GM12878 (cell line): ENCODE measurements at regions of chr1 and their contacts with region 1.

Region 1: DNA sequence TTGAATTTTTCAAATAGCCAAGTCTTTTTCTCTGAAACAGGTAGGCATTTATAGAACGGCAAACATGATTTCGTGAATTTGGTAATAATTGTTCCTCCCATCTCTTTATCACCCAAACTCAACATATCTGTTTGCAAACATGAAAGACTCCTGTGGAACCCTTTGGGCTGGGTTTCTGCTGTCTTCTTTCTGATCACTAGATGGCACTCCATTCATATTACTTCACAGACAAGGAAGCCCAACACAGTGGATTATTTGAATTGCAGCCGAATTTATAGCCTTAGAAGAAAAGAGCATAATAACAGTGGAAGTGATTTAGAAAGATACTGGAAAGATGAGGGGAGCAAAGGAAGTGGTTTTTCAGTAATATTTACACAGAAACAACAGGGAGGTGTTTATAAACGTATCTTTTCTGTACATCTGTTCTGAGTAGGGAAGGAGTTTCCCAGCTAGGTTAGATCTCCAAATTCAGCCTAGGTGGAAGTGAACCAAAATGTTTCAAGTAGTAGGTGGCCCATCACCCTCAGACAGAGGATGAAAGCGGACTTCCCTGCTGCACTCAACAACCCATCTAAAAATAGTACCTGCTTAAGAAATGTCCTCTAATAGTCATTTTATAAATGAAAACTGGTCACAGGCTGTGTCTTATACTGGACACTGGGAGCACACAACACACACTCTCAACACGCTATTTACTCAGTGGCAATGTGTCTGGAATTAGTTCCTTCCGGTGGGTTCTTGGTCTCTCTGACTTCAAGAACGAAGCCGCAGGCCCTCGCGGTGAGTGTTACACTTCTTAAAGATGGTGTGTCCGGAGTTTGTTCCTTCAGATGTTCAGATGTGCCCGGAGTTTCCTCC is 67.6 kb downstream of the MAP3K21 start:
- DNase-seq: no peak
- ATAC-seq: peak; percentile 96
- H3K4me3 ChIP-seq: no peak overlapping the region
- H3K27ac ChIP-seq: no peak overlapping the region
- H3K4me1 ChIP-seq: no peaks in the 10 kb centered on the region
- H3K27me3 ChIP-seq: no peaks in the 10 kb centered on the region; a peak in 1 of 4 replicates
- CTCF ChIP-seq: peak; percentile 76 to 89 (median 77)
- EP300 ChIP-seq: no peak
- POLR2A ChIP-seq: no peak
- RAD21 ChIP-seq: peak; percentile 98

Region 2: GRCh38 chr1:233364695-233365539 is 30.2 kb before region 1 on chr1:
- CTCF ChIA-PET with region 1: interaction called, 16 read pairs
- POLR2A ChIA-PET with region 1: no interaction called
- RAD21 ChIA-PET with region 1: no interaction called
- SMC1A ChIA-PET with region 1: no interaction called
- in situ Hi-C with region 1: no loop called
- intact Hi-C with region 1: no loop called
- DNase-seq: no peak
- ATAC-seq: 0 out of 3 replicates have a peak, but pooled peaks have one; percentile 19
- H3K4me3 ChIP-seq: no peak overlapping the region
- H3K27ac ChIP-seq: no peak overlapping the region
- H3K4me1 ChIP-seq: no peaks in the 10 kb centered on the region
- H3K27me3 ChIP-seq: no peaks in the 10 kb centered on the region
- CTCF ChIP-seq: peak; percentile 45 to 53 (median 52); a peak in 4 of 6 replicates
- EP300 ChIP-seq: no peak
- POLR2A ChIP-seq: no peak
- RAD21 ChIP-seq: peak; percentile 49; the same call in 1 of the 2 replicates

Region 3: GRCh38 chr1:233505130-233505529 is 110.0 kb after region 1 on chr1:
- CTCF ChIA-PET with region 1: no interaction called
- POLR2A ChIA-PET with region 1: no interaction called
- RAD21 ChIA-PET with region 1: no interaction called
- SMC1A ChIA-PET with region 1: no interaction called
- in situ Hi-C with region 1: no loop called
- intact Hi-C with region 1: no loop called
- DNase-seq: no peak
- ATAC-seq: peak; percentile 50
- H3K4me3 ChIP-seq: no peak overlapping the region
- H3K27ac ChIP-seq: no peak overlapping the region
- H3K4me1 ChIP-seq: no peaks in the 10 kb centered on the region
- H3K27me3 ChIP-seq: no peaks in the 10 kb centered on the region
- CTCF ChIP-seq: no peak
- EP300 ChIP-seq: no peak
- POLR2A ChIP-seq: no peak
- RAD21 ChIP-seq: no peak

Region 4: GRCh38 chr1:233607252-233608119 is 212.4 kb after region 1 on chr1:
- CTCF ChIA-PET with region 1: no interaction called
- POLR2A ChIA-PET with region 1: no interaction called
- RAD21 ChIA-PET with region 1: no interaction called
- SMC1A ChIA-PET with region 1: no interaction called
- in situ Hi-C with region 1: no loop called
- intact Hi-C with region 1: loop called (anchors 2 kb)
- DNase-seq: no peak
- ATAC-seq: peak; percentile 90
- H3K4me3 ChIP-seq: no peak overlapping the region
- H3K27ac ChIP-seq: no peak overlapping the region
- H3K4me1 ChIP-seq: peaks cover 11% of the 10 kb centered on the region
- H3K27me3 ChIP-seq: no peaks in the 10 kb centered on the region
- CTCF ChIP-seq: no peak
- EP300 ChIP-seq: no peak
- POLR2A ChIP-seq: no peak
- RAD21 ChIP-seq: no peak